HepG2 (cell line): ENCODE measurements at regions of chr1 and their contacts with region 1.

Region 1: DNA sequence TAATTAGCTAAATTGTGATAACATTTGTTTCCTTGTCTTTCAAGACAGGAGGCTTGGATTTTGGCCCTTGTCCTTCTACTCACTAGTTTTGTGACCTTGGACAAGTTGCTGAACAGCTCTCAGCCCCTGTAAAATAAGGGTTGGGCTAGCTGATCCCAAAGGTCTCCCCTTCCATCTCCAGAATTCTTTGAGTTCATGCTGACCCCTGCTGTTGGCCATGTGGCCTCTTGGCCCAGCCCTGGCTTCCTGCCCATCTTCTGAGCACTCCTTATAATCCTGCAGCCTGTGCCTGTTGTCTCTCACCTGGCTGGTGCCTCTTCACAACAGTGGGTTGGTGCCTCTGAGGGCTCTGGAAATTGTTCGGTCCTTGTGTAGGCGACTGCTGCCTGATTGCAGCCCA is 10.1 kb downstream of the PTGFRN start:
- DNase-seq: peak; percentile 18
- ATAC-seq: no peak
- H3K4me3 ChIP-seq: no peak overlapping the region
- H3K27ac ChIP-seq: no peak overlapping the region
- H3K4me1 ChIP-seq: peaks cover 53% of the 10 kb centered on the region
- H3K27me3 ChIP-seq: peaks cover 0 to 6% of the 10 kb centered on the region in 2 experiments; a peak in 1 of 5 replicates
- CTCF ChIP-seq: peak; percentile 45
- EP300 ChIP-seq: no peak
- POLR2A ChIP-seq: no peak
- RAD21 ChIP-seq: no peak

Region 2: DNA sequence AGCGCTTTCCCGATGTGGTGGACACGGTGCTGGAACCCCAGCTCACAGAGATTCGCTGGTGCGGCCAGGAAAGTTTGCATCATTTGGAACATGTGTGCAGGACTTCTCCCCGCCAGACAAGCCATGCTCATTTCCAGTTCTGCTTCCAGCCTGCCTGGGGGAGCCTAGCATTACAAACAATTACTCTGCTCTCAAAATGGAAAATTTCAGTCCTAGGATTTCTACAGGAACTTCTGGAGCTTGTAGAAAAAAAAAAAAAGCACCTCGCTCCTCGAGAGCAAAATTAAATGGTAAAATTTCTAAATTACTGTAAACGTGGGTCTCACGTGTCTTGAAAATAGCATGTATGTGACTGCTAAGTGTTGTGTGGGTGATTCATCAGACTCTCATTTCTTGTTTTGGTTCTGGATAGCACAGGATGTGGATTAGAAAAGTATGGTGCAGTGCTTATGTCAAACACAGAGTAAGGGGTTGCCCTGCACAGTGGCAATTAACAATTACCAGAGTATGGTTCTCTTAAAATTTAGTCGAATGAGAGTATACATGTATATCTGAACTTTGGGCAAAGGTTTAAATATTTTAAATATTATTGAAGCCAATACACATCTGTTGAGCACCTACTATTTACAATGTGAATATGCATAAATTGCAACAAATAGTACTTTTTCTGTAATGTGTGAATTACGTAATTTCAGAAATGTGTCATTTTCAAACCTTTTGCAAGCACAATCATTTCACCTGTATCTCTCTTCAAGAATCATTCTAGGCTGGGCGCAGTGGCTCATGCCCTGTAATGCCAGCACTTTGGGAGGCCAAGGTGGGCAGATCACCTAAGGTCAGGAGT is 71.9 kb before region 1 on chr1:
- CTCF ChIA-PET with region 1: no interaction called
- POLR2A ChIA-PET with region 1: no interaction called
- in situ Hi-C with region 1: no loop called
- intact Hi-C with region 1: loop called (anchors 10 kb)
- DNase-seq: no peak
- ATAC-seq: no peak
- H3K4me3 ChIP-seq: no peak overlapping the region
- H3K27ac ChIP-seq: no peak overlapping the region
- H3K4me1 ChIP-seq: no peaks in the 10 kb centered on the region
- H3K27me3 ChIP-seq: no peaks in the 10 kb centered on the region
- CTCF ChIP-seq: no peak
- EP300 ChIP-seq: no peak
- POLR2A ChIP-seq: no peak
- RAD21 ChIP-seq: no peak

Region 3: GRCh38 chr1:116909510-116910378 is 10.1 kb before region 1 on chr1 and contains the start of gene PTGFRN:
- CTCF ChIA-PET with region 1: no interaction called
- POLR2A ChIA-PET with region 1: no interaction called
- in situ Hi-C with region 1: no loop called
- intact Hi-C with region 1: no loop called
- DNase-seq: no peak
- ATAC-seq: peak; percentile 76
- H3K4me3 ChIP-seq: peak within 1 kb of the TSS; percentile 58 to 70 (median 67); a peak in 5 of 6 replicates
- H3K27ac ChIP-seq: no peak within 1 kb of the TSS
- H3K4me1 ChIP-seq: peaks cover 7% of the 10 kb centered on the region; the same call in 1 of the 2 replicates
- H3K27me3 ChIP-seq: peaks cover 3 to 34% of the 10 kb centered on the region in 2 experiments; a peak in 4 of 5 replicates
- CTCF ChIP-seq: no peak
- EP300 ChIP-seq: no peak
- POLR2A ChIP-seq: no peak
- RAD21 ChIP-seq: no peak
- total RNA-seq, gene PTGFRN: 5.2 and 11.3 TPM in 2 replicates